Left ventricle myocardium superior (tissue), 1 donor: ENCODE measurements at regions of chr1 and their contacts with region 1.

Region 1: DNA sequence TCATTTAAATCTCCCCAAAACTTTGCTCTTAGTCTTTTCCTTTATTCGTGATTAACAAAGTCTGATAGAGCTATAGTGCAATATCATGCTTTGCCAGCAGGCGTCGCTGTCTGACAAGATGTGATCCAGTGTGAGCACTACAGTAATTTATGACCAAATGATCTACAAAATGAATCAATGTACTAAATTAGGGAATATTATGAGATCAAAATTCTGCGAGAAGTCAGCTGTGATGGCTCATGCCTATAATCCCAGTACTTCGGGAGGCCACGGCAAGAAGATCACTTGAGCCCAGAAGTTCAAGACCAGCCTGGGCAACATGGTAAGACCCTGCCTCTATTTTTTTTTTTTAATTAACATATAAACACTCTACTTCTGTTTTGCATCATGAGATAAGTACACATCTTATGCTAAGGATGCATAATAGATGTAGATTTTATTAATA is 3.6 kb upstream of the SPSB1 start:
- DNase-seq: peak; percentile 75
- ATAC-seq: no peak

Region 2: DNA sequence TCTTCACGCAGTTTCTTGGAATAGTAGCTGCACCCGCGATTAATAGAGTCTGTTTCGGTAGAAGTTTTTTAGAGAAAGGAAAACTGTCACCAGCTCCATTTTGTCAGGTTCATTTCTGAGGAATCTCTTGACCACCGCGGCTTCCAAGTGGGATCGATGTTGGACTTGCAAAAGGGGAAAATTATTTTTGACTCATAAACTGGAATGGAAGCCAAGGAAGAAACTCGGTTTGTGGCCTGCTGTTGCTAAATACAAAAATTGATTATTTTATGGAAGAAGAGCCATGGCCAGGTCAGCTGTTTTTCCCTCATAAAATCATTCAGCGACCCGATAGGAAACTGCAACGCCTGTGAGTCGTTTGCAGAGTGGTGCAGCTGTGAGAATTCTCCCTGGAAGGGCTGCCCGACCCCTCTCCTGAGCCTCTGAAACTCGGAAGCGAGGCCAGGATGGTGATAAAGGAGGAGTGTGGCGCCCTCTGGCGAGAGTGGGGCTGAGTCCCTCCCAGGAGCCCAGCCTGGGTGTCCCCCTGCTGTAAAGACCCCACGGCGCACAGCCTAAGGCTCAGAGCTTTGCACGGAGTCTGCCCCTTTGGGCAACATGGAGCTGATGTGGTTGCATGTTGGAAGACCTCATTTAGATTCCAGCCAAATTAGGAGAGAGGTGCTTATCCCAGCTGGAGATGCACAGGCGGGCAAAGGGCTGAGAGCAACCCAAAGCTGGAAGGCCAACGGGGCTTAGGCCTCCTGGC is 166.5 kb after region 1 on chr1:
- intact Hi-C with region 1: loop called (anchors 10 kb)
- DNase-seq: peak; percentile 87
- ATAC-seq: peak; percentile 86

Region 3: GRCh38 chr1:9494929-9495758 is 206.0 kb after region 1 on chr1:
- intact Hi-C with region 1: loop called (anchors 10 kb)
- DNase-seq: peak; percentile 79
- ATAC-seq: peak; percentile 76